PC-9 (cell line): ENCODE measurements at regions of chr5 and their contacts with region 1.

Region 1: DNA sequence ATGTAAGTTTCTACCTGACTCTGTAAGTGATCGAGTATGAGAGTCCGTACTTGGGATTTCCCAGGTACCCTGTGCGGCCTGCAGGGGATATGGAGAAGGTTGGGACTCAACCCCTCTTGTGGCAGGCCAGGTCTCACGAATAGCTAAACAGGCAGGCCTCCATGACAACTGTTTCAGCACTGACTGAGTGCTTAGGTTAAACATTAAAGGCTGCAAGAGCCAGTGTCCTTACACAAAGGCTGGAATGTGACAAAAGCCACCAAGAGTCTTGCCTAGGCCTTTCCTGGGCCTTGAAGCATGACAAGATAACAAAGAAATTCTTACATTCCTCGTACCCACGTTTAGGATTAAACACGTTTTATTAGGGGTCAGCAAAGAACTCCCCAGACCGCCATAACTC is 58.6 kb downstream of the THBS4 start:
- DNase-seq: no peak
- H3K4me3 ChIP-seq: no peak overlapping the region
- H3K27ac ChIP-seq: no peak overlapping the region
- H3K4me1 ChIP-seq: no peaks in the 10 kb centered on the region
- H3K27me3 ChIP-seq: no peaks in the 10 kb centered on the region
- CTCF ChIP-seq: no peak

Region 2: GRCh38 chr5:79774171-79774854 is 319.5 kb before region 1 on chr5:
- CTCF ChIA-PET with region 1: no interaction called
- POLR2A ChIA-PET with region 1: no interaction called
- intact Hi-C with region 1: no loop called
- DNase-seq: peak in 1 of 2 experiments; percentile 3
- H3K4me3 ChIP-seq: no peak overlapping the region
- H3K27ac ChIP-seq: no peak overlapping the region
- H3K4me1 ChIP-seq: no peaks in the 10 kb centered on the region
- H3K27me3 ChIP-seq: no peaks in the 10 kb centered on the region
- CTCF ChIP-seq: peak; percentile 39

Region 3: GRCh38 chr5:80034962-80035821 is 58.6 kb before region 1 on chr5 and contains the start of gene THBS4:
- CTCF ChIA-PET with region 1: no interaction called
- POLR2A ChIA-PET with region 1: no interaction called
- intact Hi-C with region 1: no loop called
- DNase-seq: no peak
- H3K4me3 ChIP-seq: no peak within 1 kb of the TSS
- H3K27ac ChIP-seq: no peak within 1 kb of the TSS
- H3K4me1 ChIP-seq: no peaks in the 10 kb centered on the region
- H3K27me3 ChIP-seq: no peaks in the 10 kb centered on the region
- CTCF ChIP-seq: no peak
- total RNA-seq, gene THBS4: 6.6 and 8.1 TPM in 2 replicates

Region 4: DNA sequence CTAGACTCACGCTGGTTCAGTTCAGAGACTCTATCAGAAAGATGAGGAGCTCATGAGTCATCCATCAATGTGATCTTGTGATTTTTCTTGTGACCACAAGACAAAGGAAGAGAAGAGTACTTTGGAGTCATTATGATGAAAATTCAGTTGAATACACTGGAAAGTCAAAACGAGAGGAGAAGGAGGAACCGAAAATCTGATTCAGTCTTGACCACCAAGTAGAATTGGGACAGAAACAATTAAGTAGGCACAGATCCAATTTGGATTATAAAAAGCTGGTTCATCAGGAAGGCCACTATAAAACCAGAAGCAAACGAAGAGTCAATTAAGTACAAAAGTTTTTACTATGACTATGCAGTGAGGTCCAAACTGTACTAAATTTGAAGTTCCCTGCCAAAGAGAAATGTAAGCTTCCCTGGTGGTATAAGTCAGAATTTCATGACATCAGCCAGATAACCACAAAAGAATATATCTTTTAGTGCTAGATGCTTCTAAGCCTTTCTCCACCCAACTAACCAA is 32.2 kb after region 1 on chr5:
- CTCF ChIA-PET with region 1: no interaction called
- POLR2A ChIA-PET with region 1: no interaction called
- intact Hi-C with region 1: no loop called
- DNase-seq: no peak
- H3K4me3 ChIP-seq: no peak overlapping the region
- H3K27ac ChIP-seq: no peak overlapping the region
- H3K4me1 ChIP-seq: no peaks in the 10 kb centered on the region
- H3K27me3 ChIP-seq: no peaks in the 10 kb centered on the region
- CTCF ChIP-seq: no peak

Region 5: GRCh38 chr5:80216753-80217596 is 123.2 kb after region 1 on chr5:
- CTCF ChIA-PET with region 1: interaction called, 12 read pairs
- POLR2A ChIA-PET with region 1: no interaction called
- intact Hi-C with region 1: no loop called
- DNase-seq: no peak
- H3K4me3 ChIP-seq: no peak overlapping the region
- H3K27ac ChIP-seq: peak overlapping the region; percentile 88
- H3K4me1 ChIP-seq: peaks cover 52% of the 10 kb centered on the region
- H3K27me3 ChIP-seq: no peaks in the 10 kb centered on the region
- CTCF ChIP-seq: no peak

Region 6: GRCh38 chr5:80268916-80269315 is 175.1 kb after region 1 on chr5:
- CTCF ChIA-PET with region 1: interaction called, 15 read pairs
- POLR2A ChIA-PET with region 1: no interaction called
- intact Hi-C with region 1: no loop called
- DNase-seq: no peak
- H3K4me3 ChIP-seq: no peak overlapping the region
- H3K27ac ChIP-seq: no peak overlapping the region
- H3K4me1 ChIP-seq: peaks cover 22% of the 10 kb centered on the region
- H3K27me3 ChIP-seq: no peaks in the 10 kb centered on the region
- CTCF ChIP-seq: no peak

Region 7: GRCh38 chr5:80308526-80308925 is 214.7 kb after region 1 on chr5:
- CTCF ChIA-PET with region 1: interaction called, 16 read pairs
- POLR2A ChIA-PET with region 1: interaction called, 13 read pairs
- intact Hi-C with region 1: loop called (anchors 1 kb)
- DNase-seq: no peak
- H3K4me3 ChIP-seq: no peak overlapping the region
- H3K27ac ChIP-seq: no peak overlapping the region
- H3K4me1 ChIP-seq: no peaks in the 10 kb centered on the region
- H3K27me3 ChIP-seq: no peaks in the 10 kb centered on the region
- CTCF ChIP-seq: no peak

Region 8: DNA sequence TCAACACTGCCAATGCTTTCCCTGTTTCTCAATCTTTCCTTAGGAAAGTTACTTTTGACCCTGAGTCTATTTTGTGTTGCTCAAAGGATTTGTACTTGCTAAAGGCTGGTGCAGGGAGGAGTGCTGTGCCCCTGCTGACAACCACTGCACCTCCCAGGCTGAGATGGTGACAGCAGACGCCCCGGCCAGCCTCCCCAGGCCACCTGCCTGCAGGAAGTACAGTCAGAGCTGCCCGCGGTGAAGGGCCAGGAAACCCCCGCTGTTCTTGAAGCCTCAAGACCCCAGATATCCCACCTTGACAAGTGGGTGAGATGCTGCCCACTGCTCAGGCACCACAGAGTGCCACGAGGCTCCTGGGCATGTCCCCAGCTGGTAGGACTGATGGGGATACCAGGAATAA is 1095.2 kb after region 1 on chr5:
- CTCF ChIA-PET with region 1: no interaction called
- POLR2A ChIA-PET with region 1: interaction called, 14 read pairs
- intact Hi-C with region 1: loop called (anchors 2 kb)
- DNase-seq: no peak
- H3K4me3 ChIP-seq: no peak overlapping the region
- H3K27ac ChIP-seq: no peak overlapping the region
- H3K4me1 ChIP-seq: no peaks in the 10 kb centered on the region
- H3K27me3 ChIP-seq: no peaks in the 10 kb centered on the region
- CTCF ChIP-seq: no peak